Adrenal gland (tissue), 19 donors: ENCODE measurements at regions of chr16 and their contacts with region 1.

Region 1: DNA sequence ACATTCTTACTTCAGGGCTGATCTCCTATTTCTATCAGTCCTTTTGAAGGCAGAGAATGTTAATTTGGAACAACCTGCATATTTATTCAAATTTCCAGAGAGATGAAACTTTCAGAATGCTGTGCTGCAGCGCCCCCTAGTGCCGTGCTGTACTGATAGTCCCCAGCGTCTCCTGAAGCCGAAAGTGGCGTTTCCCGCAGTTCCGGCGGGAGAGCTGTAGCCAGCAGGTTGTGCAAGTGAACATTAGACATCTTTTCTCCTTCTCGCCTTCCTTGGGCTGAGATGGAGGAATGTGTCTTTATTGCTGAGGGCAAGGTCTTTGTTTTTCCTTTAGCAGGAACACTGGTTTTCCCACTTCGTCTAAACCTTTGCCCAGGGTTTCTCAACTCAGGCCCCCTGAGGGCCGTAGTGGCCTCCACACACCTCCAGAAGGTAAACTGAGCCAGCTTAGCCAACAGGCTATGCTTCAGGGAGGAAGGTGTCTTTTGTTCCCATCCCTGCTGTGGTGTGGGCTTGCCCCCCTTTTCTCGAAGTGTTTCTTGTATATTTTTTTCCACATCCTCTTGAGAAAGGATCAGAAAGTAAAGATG is 26.4 kb downstream of the USP10 start:
- DNase-seq: peak; percentile 84 to 97 (median 91)
- H3K4me3 ChIP-seq: no peak overlapping the region
- H3K27ac ChIP-seq: peak overlapping the region in 1 of 5 donors; percentile 39
- H3K4me1 ChIP-seq: peaks cover 10 to 53% of the 10 kb centered on the region in 2 donors
- H3K27me3 ChIP-seq: no peaks in the 10 kb centered on the region
- CTCF ChIP-seq: peak; percentile 89 to 98 (median 94)
- POLR2A ChIP-seq: no peak

Region 2: DNA sequence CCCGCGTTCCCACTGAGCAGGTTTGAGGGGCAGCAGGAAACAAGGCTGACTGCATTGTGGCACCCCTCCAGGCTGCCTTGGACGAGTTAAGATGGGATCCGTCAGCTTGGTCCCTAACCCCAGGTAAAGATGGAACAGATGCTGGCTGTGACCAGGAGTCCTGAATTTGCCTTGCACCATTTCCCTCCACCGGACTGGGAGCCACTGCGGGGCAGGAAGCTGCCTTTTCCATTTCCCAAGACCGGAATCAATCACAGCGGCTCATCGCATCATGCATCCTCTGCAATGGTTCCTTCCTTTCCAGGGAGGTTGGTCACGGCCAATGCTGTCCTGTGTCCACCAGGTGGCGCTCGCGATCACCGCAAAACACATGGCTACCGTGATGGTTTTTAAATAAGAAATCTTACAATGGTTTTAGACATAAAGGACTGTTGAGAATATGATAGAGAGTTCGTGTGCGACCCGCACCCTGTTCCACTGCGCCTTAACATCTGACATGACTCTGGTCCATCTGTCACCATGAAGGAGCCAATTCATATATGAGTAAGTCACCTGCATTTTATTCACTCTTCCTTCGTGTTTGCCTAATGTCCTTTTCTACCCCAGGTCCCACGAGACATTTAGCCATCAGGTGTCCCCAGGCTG is 214.9 kb before region 1 on chr16:
- intact Hi-C with region 1: loop called in 1 of 2 experiments (anchors 5 kb)
- DNase-seq: peak; percentile 78 to 95 (median 82)
- H3K4me3 ChIP-seq: no peak overlapping the region
- H3K27ac ChIP-seq: no peak overlapping the region
- H3K4me1 ChIP-seq: peaks cover 0 to 4% of the 10 kb centered on the region in 2 donors
- H3K27me3 ChIP-seq: no peaks in the 10 kb centered on the region
- CTCF ChIP-seq: peak; percentile 92 to 99 (median 96)
- POLR2A ChIP-seq: no peak

Region 3: GRCh38 chr16:84617791-84618580 is 108.2 kb before region 1 on chr16 and contains the start of gene COTL1:
- intact Hi-C with region 1: loop called (anchors 5 to 10 kb)
- DNase-seq: peak; percentile 96 to 98 (median 97)
- H3K4me3 ChIP-seq: peak within 1 kb of the TSS in 3 of 4 donors; percentile 44 to 89 (median 59)
- H3K27ac ChIP-seq: peak within 1 kb of the TSS in 3 of 5 donors; percentile 60 to 89 (median 69)
- H3K4me1 ChIP-seq: peaks cover 0 to 36% of the 10 kb centered on the region in 2 donors
- H3K27me3 ChIP-seq: no peaks in the 10 kb centered on the region
- CTCF ChIP-seq: no peak
- POLR2A ChIP-seq: peak; percentile 74 to 78
- total RNA-seq, gene COTL1: 20.1 to 93.8 (median 56.8) TPM

Region 4: GRCh38 chr16:84629580-84629979 is 96.6 kb before region 1 on chr16:
- intact Hi-C with region 1: loop called (anchors 5 to 10 kb)
- DNase-seq: no peak
- H3K4me3 ChIP-seq: no peak overlapping the region
- H3K27ac ChIP-seq: no peak overlapping the region
- H3K4me1 ChIP-seq: peaks cover 9 to 10% of the 10 kb centered on the region in 2 donors
- H3K27me3 ChIP-seq: no peaks in the 10 kb centered on the region
- CTCF ChIP-seq: no peak
- POLR2A ChIP-seq: no peak

Region 5: GRCh38 chr16:84672276-84673202 is 53.6 kb before region 1 on chr16:
- intact Hi-C with region 1: loop called in 1 of 2 experiments (anchors 5 kb)
- DNase-seq: peak; percentile 71 to 92 (median 81)
- H3K4me3 ChIP-seq: no peak overlapping the region
- H3K27ac ChIP-seq: no peak overlapping the region
- H3K4me1 ChIP-seq: no peaks in the 10 kb centered on the region
- H3K27me3 ChIP-seq: no peaks in the 10 kb centered on the region
- CTCF ChIP-seq: peak; percentile 75 to 94 (median 90)
- POLR2A ChIP-seq: no peak

Region 6: DNA sequence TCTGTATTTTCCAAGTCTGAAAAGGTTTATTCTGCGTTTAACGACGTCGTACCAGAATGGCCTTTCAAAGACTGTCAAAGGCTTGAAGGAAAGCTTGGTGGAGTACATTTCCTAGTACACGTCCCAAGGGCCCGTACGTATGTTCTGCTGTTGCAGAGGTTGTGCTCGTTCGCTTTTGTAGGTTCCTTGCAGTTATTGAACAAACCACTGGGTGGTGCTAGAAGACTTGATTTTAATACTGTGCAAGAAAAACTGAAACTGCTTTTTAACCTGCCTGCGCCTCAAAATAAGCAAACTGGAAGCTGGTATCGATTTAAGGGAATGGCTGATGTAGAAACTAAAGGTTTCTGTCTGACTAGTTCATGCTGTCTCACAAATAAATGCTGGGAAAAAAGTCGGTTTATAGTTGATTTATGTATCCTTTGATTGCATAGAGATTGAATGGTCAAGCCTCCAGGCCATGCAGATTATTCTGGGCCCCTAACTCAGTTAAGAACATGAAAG is 28.2 kb after region 1 on chr16:
- intact Hi-C with region 1: no loop called
- DNase-seq: peak; percentile 69 to 91 (median 79)
- H3K4me3 ChIP-seq: no peak overlapping the region
- H3K27ac ChIP-seq: peak overlapping the region in 3 of 5 donors; percentile 10 to 48 (median 37)
- H3K4me1 ChIP-seq: peaks cover 14 to 52% of the 10 kb centered on the region in 2 donors
- H3K27me3 ChIP-seq: no peaks in the 10 kb centered on the region
- CTCF ChIP-seq: peak; percentile 70 to 94 (median 88)
- POLR2A ChIP-seq: no peak

Region 7: DNA sequence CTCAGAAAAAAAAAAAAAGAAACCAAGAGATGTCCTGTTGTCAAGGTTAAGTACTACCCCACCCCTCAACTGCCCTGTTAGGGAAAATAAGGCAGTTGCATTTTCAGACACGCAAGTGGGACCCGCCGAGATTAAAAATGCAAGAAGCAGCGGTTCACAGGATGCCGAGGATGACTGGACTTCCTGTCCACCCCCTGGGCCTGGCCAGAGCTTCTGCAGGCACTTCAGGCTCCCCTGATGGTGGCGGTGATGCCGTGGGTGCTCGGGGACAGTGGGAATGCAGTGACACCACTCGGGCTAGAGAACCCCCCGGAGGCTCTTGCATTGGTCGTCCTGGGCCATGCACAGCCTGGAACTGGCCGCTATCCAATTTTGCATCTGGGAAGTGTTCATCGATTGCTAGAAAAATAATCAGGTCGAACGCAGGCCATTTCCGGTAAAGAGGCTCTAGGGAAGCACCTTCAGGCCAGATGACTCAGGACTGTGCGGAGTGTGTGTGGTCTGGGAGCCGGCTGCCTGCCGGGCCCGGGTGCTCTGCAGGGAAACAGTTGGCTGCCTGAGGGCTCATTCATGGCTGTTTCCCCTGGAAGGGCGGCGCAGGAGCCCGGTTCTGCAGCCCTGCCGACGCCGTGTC is 80.2 kb after region 1 on chr16:
- intact Hi-C with region 1: no loop called
- DNase-seq: peak in 5 of 7 donors; percentile 35 to 67 (median 56)
- H3K4me3 ChIP-seq: no peak overlapping the region
- H3K27ac ChIP-seq: peak overlapping the region in 2 of 5 donors; percentile 38 to 79
- H3K4me1 ChIP-seq: no peaks in the 10 kb centered on the region
- H3K27me3 ChIP-seq: no peaks in the 10 kb centered on the region
- CTCF ChIP-seq: no peak
- POLR2A ChIP-seq: no peak